ENCODE measurements at regions of chr19 and their contacts with region 1.

Region 1: DNA sequence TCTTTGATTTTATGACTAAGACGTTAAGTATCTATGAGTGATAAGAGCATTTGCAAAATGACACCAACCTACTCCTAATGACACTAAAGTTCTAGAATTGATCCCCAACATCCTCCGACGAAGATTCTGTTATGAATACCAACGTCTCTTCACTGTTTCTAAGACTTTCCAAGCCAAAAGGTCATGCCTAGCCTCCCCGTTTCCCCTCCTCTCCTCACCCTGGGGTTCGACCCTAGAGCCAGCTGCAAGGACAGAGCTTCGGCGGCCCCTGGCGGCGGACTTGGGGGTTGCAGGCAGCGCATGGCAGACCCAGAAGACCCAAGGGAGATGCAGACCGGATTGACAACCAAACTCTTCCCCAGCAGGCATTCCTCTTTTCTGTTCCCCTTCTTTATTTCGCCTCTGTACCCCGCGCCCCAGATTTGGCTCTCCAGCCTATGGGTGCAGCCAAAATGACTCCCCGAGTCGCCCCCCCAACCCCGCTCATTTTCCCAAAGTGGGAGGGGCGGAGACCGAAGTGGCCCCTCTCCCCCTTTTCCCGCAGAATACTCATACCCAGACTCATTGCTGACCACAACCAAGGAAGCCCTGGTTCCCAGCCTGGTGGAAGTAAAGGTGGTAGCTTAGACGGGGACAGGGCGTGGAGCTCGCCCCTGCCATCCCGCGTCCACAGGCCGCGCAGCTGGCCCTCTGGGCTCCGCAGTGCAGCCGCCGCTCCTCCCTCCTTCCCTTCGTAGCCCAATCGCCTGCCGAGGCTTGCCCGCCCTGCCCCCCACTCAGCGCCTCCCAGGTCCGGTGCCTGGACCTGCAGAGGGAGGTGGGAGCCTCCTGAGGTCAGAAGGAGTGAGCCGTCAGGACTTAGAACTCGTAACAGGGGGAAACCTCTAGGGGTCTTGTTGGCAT is 4.1 kb upstream of the EML2 start:
- DNase-seq: peak; percentile 78 to 97 (median 90)
- ATAC-seq: peak; percentile 44
- H3K4me3 ChIP-seq: no peak overlapping the region
- H3K4me3 Mint-ChIP-seq: peak overlapping the region; percentile 61 to 91 (median 80)
- H3K27ac ChIP-seq: peak overlapping the region; percentile 78
- H3K27ac Mint-ChIP-seq: peak overlapping the region; percentile 52 to 92 (median 85)
- H3K4me1 ChIP-seq: peaks cover 22 to 25% of the 10 kb centered on the region in 2 donors
- H3K4me1 Mint-ChIP-seq: peaks cover 31 to 54% (median 43%) of the 10 kb centered on the region in 7 donors
- H3K27me3 ChIP-seq: no peaks in the 10 kb centered on the region
- H3K27me3 Mint-ChIP-seq: peaks cover 0 to 6% (median 3%) of the 10 kb centered on the region in 5 donors

Region 2: DNA sequence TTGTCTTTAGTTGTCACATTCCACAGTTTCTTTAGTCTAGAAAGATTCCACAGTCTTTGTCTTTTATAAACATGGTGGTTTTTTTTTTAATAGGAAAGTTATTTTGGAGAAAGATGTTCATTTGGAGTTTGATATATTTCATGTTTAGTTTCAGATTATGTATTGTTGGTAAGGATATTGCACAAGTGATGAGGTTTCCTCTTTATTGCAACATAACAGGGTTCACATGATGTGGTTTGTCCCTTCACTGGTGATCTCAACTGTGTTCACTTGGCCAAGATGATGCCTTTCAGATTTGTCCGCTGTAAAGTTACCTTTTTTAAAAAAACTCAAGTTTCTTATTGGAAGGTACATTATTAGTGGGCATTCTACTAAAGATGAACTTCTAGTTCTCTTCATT is 1637.3 kb before region 1 on chr19:
- CTCF ChIA-PET with region 1: no interaction called
- POLR2A ChIA-PET with region 1: no interaction called
- intact Hi-C with region 1: no loop called
- DNase-seq: no peak
- ATAC-seq: no peak
- H3K4me3 ChIP-seq: no peak overlapping the region
- H3K4me3 Mint-ChIP-seq: no peak overlapping the region
- H3K27ac ChIP-seq: no peak overlapping the region
- H3K27ac Mint-ChIP-seq: no peak overlapping the region
- H3K4me1 ChIP-seq: peaks cover 0 to 8% of the 10 kb centered on the region in 2 donors
- H3K4me1 Mint-ChIP-seq: peaks cover 15 to 32% (median 20%) of the 10 kb centered on the region in 7 donors
- H3K27me3 ChIP-seq: no peaks in the 10 kb centered on the region
- H3K27me3 Mint-ChIP-seq: peaks cover 0 to 2% (median 0%) of the 10 kb centered on the region in 5 donors

Region 3: GRCh38 chr19:45294291-45295029 is 348.8 kb before region 1 on chr19:
- CTCF ChIA-PET with region 1: no interaction called
- POLR2A ChIA-PET with region 1: no interaction called
- intact Hi-C with region 1: no loop called
- DNase-seq: no peak
- ATAC-seq: no peak
- H3K4me3 ChIP-seq: no peak overlapping the region
- H3K4me3 Mint-ChIP-seq: no peak overlapping the region
- H3K27ac ChIP-seq: no peak overlapping the region
- H3K27ac Mint-ChIP-seq: no peak overlapping the region
- H3K4me1 ChIP-seq: no peaks in the 10 kb centered on the region
- H3K4me1 Mint-ChIP-seq: no peaks in the 10 kb centered on the region
- H3K27me3 ChIP-seq: no peaks in the 10 kb centered on the region
- H3K27me3 Mint-ChIP-seq: no peaks in the 10 kb centered on the region

Region 4: GRCh38 chr19:45423589-45424190 is 219.6 kb before region 1 on chr19 and contains the start of gene ERCC1:
- CTCF ChIA-PET with region 1: no interaction called
- POLR2A ChIA-PET with region 1: no interaction called
- intact Hi-C with region 1: loop called in 1 of 2 experiments (anchors 1 kb)
- DNase-seq: peak in 7 of 9 donors; percentile 25 to 83 (median 52)
- ATAC-seq: peak; percentile 71
- H3K4me3 ChIP-seq: peak within 1 kb of the TSS; percentile 72
- H3K4me3 Mint-ChIP-seq: peak within 1 kb of the TSS; percentile 88 to 100 (median 94)
- H3K27ac ChIP-seq: peak within 1 kb of the TSS; percentile 77
- H3K27ac Mint-ChIP-seq: peak within 1 kb of the TSS; percentile 83 to 97 (median 91)
- H3K4me1 ChIP-seq: peaks cover 24 to 28% of the 10 kb centered on the region in 2 donors
- H3K4me1 Mint-ChIP-seq: peaks cover 22 to 57% (median 50%) of the 10 kb centered on the region in 7 donors
- H3K27me3 ChIP-seq: peaks cover 0 to 3% of the 10 kb centered on the region in 2 donors
- H3K27me3 Mint-ChIP-seq: peaks cover 0 to 10% (median 3%) of the 10 kb centered on the region in 5 donors
- total RNA-seq, gene ERCC1: 45.1 to 88.2 (median 53.4) TPM

Region 5: DNA sequence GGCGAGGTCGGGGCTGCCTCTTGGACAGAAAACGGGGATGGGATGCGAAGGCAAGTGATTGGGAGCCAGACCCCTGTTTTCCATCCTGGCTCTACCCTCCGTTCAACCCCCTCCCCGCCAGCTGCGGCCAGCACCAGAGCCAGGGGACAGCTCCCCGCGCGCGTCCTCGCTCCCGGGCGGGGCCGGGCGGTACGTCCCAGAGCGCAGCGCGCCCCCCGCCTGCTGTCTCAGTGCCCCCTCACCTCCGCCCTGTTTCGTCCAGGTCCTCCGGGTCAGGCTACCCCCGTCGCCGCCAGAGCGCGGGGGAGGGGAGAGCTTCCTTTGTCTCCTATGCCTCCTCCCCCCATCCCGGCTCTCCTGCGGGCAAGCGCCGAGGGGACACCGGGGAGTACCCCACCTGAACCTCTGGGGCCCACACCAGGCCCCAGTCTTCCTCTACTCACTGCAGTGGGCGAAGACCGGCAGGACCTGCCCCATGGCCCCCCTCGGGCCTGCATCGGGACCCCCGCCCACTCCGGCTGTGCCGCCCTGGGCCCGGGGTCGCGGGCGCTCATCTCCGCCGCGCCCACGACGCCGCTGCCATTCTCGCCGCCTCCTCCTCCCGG is 146.8 kb before region 1 on chr19:
- CTCF ChIA-PET with region 1: interaction called, 10 read pairs
- POLR2A ChIA-PET with region 1: interaction called, 5 read pairs
- intact Hi-C with region 1: loop called (anchors 1 kb)
- DNase-seq: peak in 7 of 9 donors; percentile 44 to 75 (median 55)
- ATAC-seq: peak; percentile 33
- H3K4me3 ChIP-seq: peak overlapping the region; percentile 65
- H3K4me3 Mint-ChIP-seq: peak overlapping the region; percentile 72 to 97 (median 77)
- H3K27ac ChIP-seq: no peak overlapping the region
- H3K27ac Mint-ChIP-seq: peak overlapping the region in 4 of 9 donors; percentile 12 to 87 (median 48)
- H3K4me1 ChIP-seq: peaks cover 28 to 38% of the 10 kb centered on the region in 2 donors
- H3K4me1 Mint-ChIP-seq: peaks cover 28 to 52% (median 48%) of the 10 kb centered on the region in 7 donors
- H3K27me3 ChIP-seq: no peaks in the 10 kb centered on the region
- H3K27me3 Mint-ChIP-seq: peaks cover 12 to 37% (median 19%) of the 10 kb centered on the region in 5 donors

Region 6: GRCh38 chr19:45558399-45558878 is 84.8 kb before region 1 on chr19:
- CTCF ChIA-PET with region 1: no interaction called
- POLR2A ChIA-PET with region 1: no interaction called
- intact Hi-C with region 1: loop called in 1 of 2 experiments (anchors 1 kb)
- DNase-seq: peak; percentile 37 to 85 (median 81)
- ATAC-seq: peak; percentile 99
- H3K4me3 ChIP-seq: no peak overlapping the region
- H3K4me3 Mint-ChIP-seq: peak overlapping the region in 3 of 10 donors; percentile 52 to 75 (median 59)
- H3K27ac ChIP-seq: peak overlapping the region; percentile 18
- H3K27ac Mint-ChIP-seq: peak overlapping the region in 8 of 9 donors; percentile 14 to 86 (median 66)
- H3K4me1 ChIP-seq: peaks cover 0 to 29% of the 10 kb centered on the region in 2 donors
- H3K4me1 Mint-ChIP-seq: peaks cover 20 to 48% (median 34%) of the 10 kb centered on the region in 7 donors
- H3K27me3 ChIP-seq: no peaks in the 10 kb centered on the region
- H3K27me3 Mint-ChIP-seq: no peaks in the 10 kb centered on the region

Region 7: DNA sequence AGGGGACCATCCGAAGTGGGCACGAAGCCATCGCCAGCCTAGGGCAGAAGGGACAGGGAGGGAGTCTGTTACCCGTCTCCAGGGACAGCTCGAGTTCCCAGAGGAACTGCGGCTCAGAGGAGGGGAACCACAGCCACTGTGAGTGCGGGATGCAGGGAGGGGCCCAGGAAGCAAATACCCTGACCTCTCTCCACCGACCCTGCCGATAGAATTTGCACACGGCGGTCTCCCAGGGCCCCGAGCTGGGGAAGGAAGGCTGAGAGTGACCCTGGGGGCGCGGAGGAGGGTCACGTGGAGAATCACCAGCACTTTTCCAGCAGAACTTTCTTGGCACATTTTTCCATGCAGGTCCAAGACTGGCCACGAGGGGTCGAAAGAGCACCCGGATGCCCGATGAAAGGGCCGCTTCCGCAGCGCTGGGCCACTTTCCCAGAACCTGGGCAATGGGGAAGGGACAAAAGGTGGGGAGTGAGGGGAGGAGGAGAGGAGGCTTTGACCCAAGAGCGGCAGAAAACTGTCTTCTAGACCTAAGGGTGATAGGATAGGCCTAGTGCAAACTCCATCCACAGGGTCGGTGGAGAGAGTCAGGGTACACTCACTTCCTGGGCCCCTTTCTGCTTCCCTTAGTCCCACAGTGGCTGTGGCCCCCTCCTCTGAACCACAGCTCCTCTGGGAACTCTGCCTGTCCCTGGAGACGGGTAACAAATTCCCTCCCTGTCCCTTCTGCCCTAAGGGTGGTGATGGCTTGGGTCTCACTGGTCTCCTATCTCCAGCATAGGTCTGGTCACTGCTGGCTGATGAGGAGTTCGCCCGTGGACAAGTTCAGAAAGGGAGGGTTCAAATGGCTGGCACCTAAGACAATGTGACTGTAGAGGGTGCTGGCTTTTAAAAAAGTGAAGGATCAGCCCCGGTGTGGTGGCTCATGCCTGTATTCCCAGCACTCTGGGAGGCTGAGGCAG is 35.9 kb before region 1 on chr19:
- CTCF ChIA-PET with region 1: interaction called, 44 read pairs
- POLR2A ChIA-PET with region 1: interaction called, 4 read pairs
- intact Hi-C with region 1: loop called (anchors 1 kb)
- DNase-seq: peak in 5 of 9 donors; percentile 23 to 61 (median 29)
- ATAC-seq: peak; percentile 62
- H3K4me3 ChIP-seq: no peak overlapping the region
- H3K4me3 Mint-ChIP-seq: peak overlapping the region in 7 of 10 donors; percentile 34 to 76 (median 47)
- H3K27ac ChIP-seq: no peak overlapping the region
- H3K27ac Mint-ChIP-seq: peak overlapping the region in 2 of 9 donors; percentile 32 to 82
- H3K4me1 ChIP-seq: peaks cover 0 to 5% of the 10 kb centered on the region in 2 donors
- H3K4me1 Mint-ChIP-seq: peaks cover 0 to 17% (median 6%) of the 10 kb centered on the region in 7 donors
- H3K27me3 ChIP-seq: peaks cover 0 to 3% of the 10 kb centered on the region in 2 donors
- H3K27me3 Mint-ChIP-seq: peaks cover 11 to 14% (median 12%) of the 10 kb centered on the region in 5 donors

Region 8: DNA sequence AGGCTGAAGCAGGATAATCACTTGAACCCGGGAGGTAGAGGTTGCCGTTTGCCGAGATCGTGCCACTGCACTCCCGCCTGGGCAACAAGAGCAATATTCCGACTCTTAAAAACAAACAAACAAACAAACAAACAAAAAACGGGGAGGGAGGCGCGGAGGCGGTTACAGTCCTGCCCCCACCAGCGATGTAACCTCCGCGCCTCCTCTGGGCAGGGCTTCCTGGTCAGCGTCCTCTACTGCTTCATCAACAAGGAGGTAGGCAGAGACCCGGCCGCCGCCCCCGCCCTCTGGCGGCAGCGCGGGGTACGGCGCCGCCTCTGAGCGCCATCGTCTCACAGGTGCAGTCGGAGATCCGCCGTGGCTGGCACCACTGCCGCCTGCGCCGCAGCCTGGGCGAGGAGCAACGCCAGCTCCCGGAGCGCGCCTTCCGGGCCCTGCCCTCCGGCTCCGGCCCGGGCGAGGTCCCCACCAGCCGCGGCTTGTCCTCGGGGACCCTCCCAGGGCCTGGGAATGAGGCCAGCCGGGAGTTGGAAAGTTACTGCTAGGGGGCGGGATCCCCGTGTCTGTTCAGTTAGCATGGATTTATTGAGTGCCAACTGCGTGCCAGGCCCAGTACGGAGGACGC is 38.2 kb after region 1 on chr19:
- CTCF ChIA-PET with region 1: interaction called, 5 read pairs
- POLR2A ChIA-PET with region 1: interaction called, 4 read pairs
- intact Hi-C with region 1: loop called (anchors 1 kb)
- DNase-seq: peak; percentile 76 to 94 (median 87)
- ATAC-seq: peak; percentile 92
- H3K4me3 ChIP-seq: peak overlapping the region; percentile 48
- H3K4me3 Mint-ChIP-seq: peak overlapping the region; percentile 74 to 88 (median 80)
- H3K27ac ChIP-seq: peak overlapping the region; percentile 37
- H3K27ac Mint-ChIP-seq: peak overlapping the region in 8 of 9 donors; percentile 43 to 87 (median 75)
- H3K4me1 ChIP-seq: peaks cover 13 to 16% of the 10 kb centered on the region in 2 donors
- H3K4me1 Mint-ChIP-seq: peaks cover 7 to 22% (median 20%) of the 10 kb centered on the region in 7 donors
- H3K27me3 ChIP-seq: no peaks in the 10 kb centered on the region
- H3K27me3 Mint-ChIP-seq: peaks cover 0 to 4% (median 0%) of the 10 kb centered on the region in 5 donors

Region 9: GRCh38 chr19:45763691-45764294 is 120.5 kb after region 1 on chr19:
- CTCF ChIA-PET with region 1: no interaction called
- POLR2A ChIA-PET with region 1: no interaction called
- intact Hi-C with region 1: no loop called
- DNase-seq: no peak
- ATAC-seq: no peak
- H3K4me3 ChIP-seq: no peak overlapping the region
- H3K4me3 Mint-ChIP-seq: no peak overlapping the region
- H3K27ac ChIP-seq: no peak overlapping the region
- H3K27ac Mint-ChIP-seq: no peak overlapping the region
- H3K4me1 ChIP-seq: peaks cover 0 to 3% of the 10 kb centered on the region in 2 donors
- H3K4me1 Mint-ChIP-seq: peaks cover 0 to under 1% (median 0%) of the 10 kb centered on the region in 7 donors
- H3K27me3 ChIP-seq: no peaks in the 10 kb centered on the region
- H3K27me3 Mint-ChIP-seq: peaks cover 0 to 27% (median 6%) of the 10 kb centered on the region in 5 donors

Region 10: GRCh38 chr19:45895519-45895972 is 252.3 kb after region 1 on chr19:
- CTCF ChIA-PET with region 1: no interaction called
- POLR2A ChIA-PET with region 1: no interaction called
- intact Hi-C with region 1: no loop called
- DNase-seq: no peak
- ATAC-seq: no peak
- H3K4me3 ChIP-seq: no peak overlapping the region
- H3K4me3 Mint-ChIP-seq: no peak overlapping the region
- H3K27ac ChIP-seq: no peak overlapping the region
- H3K27ac Mint-ChIP-seq: no peak overlapping the region
- H3K4me1 ChIP-seq: no peaks in the 10 kb centered on the region
- H3K4me1 Mint-ChIP-seq: peaks cover 7 to 16% (median 10%) of the 10 kb centered on the region in 7 donors
- H3K27me3 ChIP-seq: no peaks in the 10 kb centered on the region
- H3K27me3 Mint-ChIP-seq: no peaks in the 10 kb centered on the region

Measured in naive thymus-derived CD4-positive, alpha-beta T cell (primary cell).